Activated T-helper 1 cell treated with anti-CD3 and anti-CD28 coated beads, Interleukin-12 subunit alpha, Interleukin-12 subunit beta, Interleukin-2, Interleukin-4 antibody, amounts not matched to agents 30 ng/mL and 10 ng/mL and 1 ng/mL, durations not matched to agents 14 hours and 24 hours and 36 hours (primary cell): ENCODE measurements at regions of chr7 and their contacts with region 1.

Region 1: GRCh38 chr7:64562626-64563275 is at the start of gene ZNF680:
- DNase-seq: peak; percentile 85
- H3K4me3 Mint-ChIP-seq: peak within 1 kb of the TSS; percentile 99
- H3K27ac Mint-ChIP-seq: peak within 1 kb of the TSS; percentile 98
- H3K4me1 Mint-ChIP-seq: peaks cover 18% of the 10 kb centered on the region
- H3K27me3 Mint-ChIP-seq: no peaks in the 10 kb centered on the region
- total RNA-seq, gene ZNF680: 8.5 and 12.2 TPM in 2 replicates

Region 2: GRCh38 chr7:63925623-63926460 is 636.9 kb before region 1 on chr7:
- intact Hi-C with region 1: loop called (anchors 2 kb)
- DNase-seq: peak; percentile 74
- H3K4me3 Mint-ChIP-seq: peak overlapping the region; percentile 89
- H3K27ac Mint-ChIP-seq: peak overlapping the region; percentile 89
- H3K4me1 Mint-ChIP-seq: peaks cover 6% of the 10 kb centered on the region
- H3K27me3 Mint-ChIP-seq: no peaks in the 10 kb centered on the region

Region 3: DNA sequence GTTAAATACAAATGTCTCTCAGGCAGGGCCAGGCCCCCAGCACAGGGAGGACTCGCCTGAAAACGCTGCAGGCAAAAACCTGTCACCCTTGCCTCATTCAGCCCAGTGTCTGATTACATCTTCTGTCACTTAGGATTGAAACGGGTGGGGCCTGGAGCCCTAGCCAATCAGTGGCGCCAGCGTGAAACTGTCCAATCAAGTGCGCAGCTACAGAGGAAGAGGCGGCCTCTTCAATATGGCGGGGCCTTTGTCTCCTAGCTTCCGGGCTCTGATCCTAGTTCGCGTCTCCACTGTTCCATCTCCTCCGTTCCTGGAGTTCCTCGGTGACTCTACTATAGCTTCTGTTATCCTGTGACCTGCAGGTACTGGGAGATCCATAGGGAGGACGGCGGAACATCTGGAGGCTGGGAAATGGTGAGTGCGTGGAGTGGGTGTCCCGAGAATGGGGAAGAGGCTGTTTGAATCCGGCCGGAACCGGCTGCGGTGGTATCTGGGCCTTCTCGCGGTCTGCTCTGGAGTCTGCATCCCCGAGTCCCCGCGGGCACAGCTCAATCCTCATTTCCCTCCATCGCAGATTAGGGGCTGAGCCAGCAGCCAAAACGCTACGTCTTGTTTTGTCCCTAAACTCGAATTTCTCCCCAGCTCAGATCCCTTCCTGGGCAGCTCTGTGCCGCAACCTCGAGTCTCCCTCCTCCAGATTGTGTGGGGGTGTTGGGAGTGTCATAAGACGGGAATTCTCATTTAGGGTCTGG is 248.8 kb before region 1 on chr7 and contains the start of gene ZNF736:
- intact Hi-C with region 1: loop called (anchors 1 kb)
- DNase-seq: peak; percentile 82
- H3K4me3 Mint-ChIP-seq: peak within 1 kb of the TSS; percentile 96
- H3K27ac Mint-ChIP-seq: peak within 1 kb of the TSS; percentile 95
- H3K4me1 Mint-ChIP-seq: peaks cover 25% of the 10 kb centered on the region
- H3K27me3 Mint-ChIP-seq: no peaks in the 10 kb centered on the region
- total RNA-seq, gene ZNF736: 19.8 and 21.3 TPM in 2 replicates

Region 4: GRCh38 chr7:64469673-64470072 is 93.1 kb before region 1 on chr7:
- intact Hi-C with region 1: no loop called
- DNase-seq: no peak
- H3K4me3 Mint-ChIP-seq: no peak overlapping the region
- H3K27ac Mint-ChIP-seq: no peak overlapping the region
- H3K4me1 Mint-ChIP-seq: no peaks in the 10 kb centered on the region
- H3K27me3 Mint-ChIP-seq: no peaks in the 10 kb centered on the region

Region 5: GRCh38 chr7:64625114-64626082 is 62.6 kb after region 1 on chr7:
- intact Hi-C with region 1: no loop called
- DNase-seq: no peak
- H3K4me3 Mint-ChIP-seq: no peak overlapping the region
- H3K27ac Mint-ChIP-seq: no peak overlapping the region
- H3K4me1 Mint-ChIP-seq: no peaks in the 10 kb centered on the region
- H3K27me3 Mint-ChIP-seq: no peaks in the 10 kb centered on the region

Region 6: DNA sequence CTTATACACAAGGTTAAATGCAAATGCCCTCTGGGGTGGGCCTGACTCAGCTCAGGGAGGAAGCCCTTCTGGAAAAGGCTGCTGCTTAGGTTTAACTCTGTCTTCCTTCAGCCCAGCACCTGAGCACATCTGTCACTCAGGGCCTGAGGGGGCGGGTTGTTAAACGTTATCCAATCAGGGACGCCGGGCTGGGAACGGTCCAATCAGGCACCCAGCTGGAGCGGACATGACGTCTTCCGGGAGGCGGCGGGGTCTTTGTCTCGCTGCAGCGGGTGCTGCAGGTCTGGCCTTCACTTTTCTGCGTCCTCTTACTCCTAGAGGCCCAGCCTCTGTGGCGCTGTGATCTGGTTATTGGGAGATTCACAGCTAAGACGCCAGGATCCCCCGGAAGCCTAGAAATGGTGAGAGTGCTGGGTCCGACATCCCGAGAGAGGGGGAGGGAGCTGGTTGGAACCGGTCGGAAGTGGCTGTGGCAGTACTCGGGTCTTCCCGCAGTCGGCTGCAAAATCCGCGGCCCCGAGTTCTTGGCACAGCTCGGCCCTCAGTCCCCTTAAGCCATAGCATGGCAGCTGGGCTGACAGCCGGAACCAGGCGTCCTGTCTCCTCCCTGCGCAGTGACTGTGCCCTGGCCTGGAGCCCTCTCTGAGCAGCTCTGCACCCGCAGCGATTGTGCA is 231.6 kb after region 1 on chr7 and contains the start of gene ZNF138:
- intact Hi-C with region 1: loop called (anchors 1 kb)
- DNase-seq: peak; percentile 90
- H3K4me3 Mint-ChIP-seq: peak within 1 kb of the TSS; percentile 98
- H3K27ac Mint-ChIP-seq: peak within 1 kb of the TSS; percentile 98
- H3K4me1 Mint-ChIP-seq: peaks cover 21% of the 10 kb centered on the region
- H3K27me3 Mint-ChIP-seq: no peaks in the 10 kb centered on the region
- total RNA-seq, gene ZNF138: 7.7 and 7.9 TPM in 2 replicates